Heart left ventricle (tissue), 16 donors: ENCODE measurements at regions of chr7 and their contacts with region 1.

Region 1: DNA sequence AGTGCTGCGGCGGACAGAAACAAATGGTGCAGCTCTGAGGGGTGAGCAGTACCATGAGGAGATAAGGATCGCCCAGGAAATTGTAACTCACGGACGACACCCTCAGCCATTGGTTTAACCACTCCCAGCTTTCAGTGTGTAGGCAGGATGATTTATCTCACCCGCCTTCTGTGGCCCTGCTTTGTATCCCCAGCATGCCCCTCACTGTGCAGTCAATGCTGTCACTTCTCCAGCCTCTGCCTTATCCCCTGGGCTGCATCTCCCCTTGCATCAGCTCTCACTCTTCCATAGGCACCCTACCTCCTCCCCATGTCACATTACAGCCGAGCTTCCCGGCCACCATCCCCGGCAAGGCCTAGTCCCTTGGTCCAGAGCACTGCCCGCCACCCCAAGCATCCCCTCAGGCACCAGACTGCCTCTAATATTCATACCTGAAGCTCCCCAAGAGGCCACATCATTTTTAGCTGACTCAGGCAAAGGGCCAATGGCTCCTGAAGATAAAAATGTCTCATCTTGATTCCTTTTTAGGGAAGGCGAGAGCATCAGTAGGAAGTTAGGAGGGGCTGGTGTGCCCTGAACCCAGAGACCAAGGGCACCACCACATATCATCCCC is 77.1 kb downstream of the CARD11 start:
- DNase-seq: no peak
- ATAC-seq: no peak
- H3K4me3 ChIP-seq: no peak overlapping the region
- H3K27ac ChIP-seq: no peak overlapping the region
- H3K4me1 ChIP-seq: peaks cover 0 to 9% (median 0%) of the 10 kb centered on the region in 12 donors
- H3K27me3 ChIP-seq: no peaks in the 10 kb centered on the region
- CTCF ChIP-seq: no peak
- POLR2A ChIP-seq: no peak

Region 2: GRCh38 chr7:2864999-2865670 is 101.4 kb before region 1 on chr7:
- intact Hi-C with region 1: no loop called
- DNase-seq: peak; percentile 58 to 76 (median 62)
- ATAC-seq: peak in 2 of 4 donors; percentile 43 to 45
- H3K4me3 ChIP-seq: no peak overlapping the region
- H3K27ac ChIP-seq: peak overlapping the region in 2 of 12 donors; percentile 85 to 97
- H3K4me1 ChIP-seq: peaks cover 0 to 31% (median 20%) of the 10 kb centered on the region in 12 donors
- H3K27me3 ChIP-seq: no peaks in the 10 kb centered on the region
- CTCF ChIP-seq: peak; percentile 83 to 96 (median 90)
- POLR2A ChIP-seq: no peak

Region 3: GRCh38 chr7:3021825-3022224 is 55.3 kb after region 1 on chr7:
- intact Hi-C with region 1: loop called in 1 of 10 experiments (anchors 2 kb)
- DNase-seq: no peak
- ATAC-seq: no peak
- H3K4me3 ChIP-seq: no peak overlapping the region
- H3K27ac ChIP-seq: no peak overlapping the region
- H3K4me1 ChIP-seq: no peaks in the 10 kb centered on the region
- H3K27me3 ChIP-seq: peaks cover 0 to under 1% (median 0%) of the 10 kb centered on the region in 9 donors
- CTCF ChIP-seq: no peak
- POLR2A ChIP-seq: no peak

Region 4: DNA sequence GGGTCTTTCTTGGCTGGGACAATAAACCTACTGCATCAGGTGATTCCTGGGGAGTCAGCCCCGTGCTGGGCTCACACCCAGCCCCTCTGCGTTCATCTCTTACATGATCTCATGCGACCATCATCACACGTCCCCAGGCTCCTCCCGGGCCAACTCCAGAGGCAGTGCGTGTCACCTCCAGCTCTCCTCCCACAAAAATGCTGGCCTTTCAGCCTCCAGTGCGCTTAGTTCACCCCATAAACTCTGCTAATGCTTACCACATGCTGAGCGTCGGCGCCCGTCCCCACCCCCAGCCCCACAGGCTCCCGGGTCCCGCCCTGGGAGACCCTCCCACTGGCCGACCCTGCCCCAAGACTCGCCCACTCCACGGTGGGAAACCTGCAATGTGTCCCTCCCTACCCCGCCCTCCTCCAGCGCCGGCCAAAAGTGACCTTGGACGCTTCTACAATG is 333.7 kb after region 1 on chr7:
- intact Hi-C with region 1: no loop called
- DNase-seq: peak in 1 of 5 donors; percentile 31
- ATAC-seq: peak in 1 of 4 donors; percentile 4
- H3K4me3 ChIP-seq: peak overlapping the region; percentile 24 to 84 (median 51)
- H3K27ac ChIP-seq: no peak overlapping the region
- H3K4me1 ChIP-seq: peaks cover 0 to 19% (median 10%) of the 10 kb centered on the region in 12 donors
- H3K27me3 ChIP-seq: peaks cover 0 to 38% (median 5%) of the 10 kb centered on the region in 9 donors
- CTCF ChIP-seq: no peak
- POLR2A ChIP-seq: no peak